ENCODE measurements at regions of chr9 and their contacts with region 1.

Region 1: DNA sequence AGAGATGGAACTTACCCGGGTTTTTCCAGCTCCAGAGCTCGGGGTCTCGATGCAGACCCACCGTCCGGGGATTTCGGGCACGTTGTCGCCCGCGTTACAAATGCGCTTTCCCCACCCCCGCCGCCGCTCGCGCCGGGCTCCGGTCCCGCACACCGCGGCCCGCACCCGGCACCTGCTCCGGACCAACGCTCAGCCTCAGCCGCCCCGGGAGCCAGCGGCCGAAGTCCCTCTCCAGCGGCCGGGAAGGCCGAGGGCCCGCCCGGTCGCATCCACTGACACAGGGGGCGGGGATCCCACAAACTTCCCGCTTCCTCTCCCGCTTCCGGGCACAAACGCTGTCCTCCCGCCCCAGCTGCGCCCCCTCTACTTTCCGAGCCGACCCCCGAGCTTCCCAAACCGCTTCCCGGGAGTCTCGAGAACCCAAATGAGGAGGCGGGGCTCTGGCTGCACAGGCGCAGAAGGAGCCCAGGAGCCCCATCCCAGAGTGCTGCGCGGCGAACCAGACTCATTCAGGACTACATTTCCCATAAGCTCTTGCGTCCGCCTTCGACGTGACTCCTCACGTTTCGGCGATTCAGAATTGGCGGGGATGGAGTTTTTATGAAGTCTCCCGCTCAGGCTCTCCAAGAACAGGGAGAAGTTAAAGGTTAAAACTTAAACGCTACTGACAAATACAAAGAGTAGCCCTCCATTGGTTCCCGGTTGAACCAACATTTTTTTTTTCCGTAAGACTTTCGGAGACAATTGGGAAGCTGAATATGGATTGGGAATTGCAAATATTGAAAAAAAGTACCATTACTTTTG is at the start of gene ZNF782:
- DNase-seq: peak; percentile 83 to 95
- ATAC-seq: peak; percentile 94 to 99
- H3K4me3 ChIP-seq: peak within 1 kb of the TSS; percentile 65
- H3K27ac ChIP-seq: peak within 1 kb of the TSS; percentile 69 to 89
- H3K4me1 ChIP-seq: no peaks in the 10 kb centered on the region; the same call in 2 of the 3 replicates
- CTCF ChIP-seq: no peak
- EP300 ChIP-seq: no peak
- POLR2A ChIP-seq: peak; percentile 65
- RAD21 ChIP-seq: no peak
- polyA plus RNA-seq, gene ZNF782: 2.1 and 2.7 TPM in 2 replicates

Region 2: DNA sequence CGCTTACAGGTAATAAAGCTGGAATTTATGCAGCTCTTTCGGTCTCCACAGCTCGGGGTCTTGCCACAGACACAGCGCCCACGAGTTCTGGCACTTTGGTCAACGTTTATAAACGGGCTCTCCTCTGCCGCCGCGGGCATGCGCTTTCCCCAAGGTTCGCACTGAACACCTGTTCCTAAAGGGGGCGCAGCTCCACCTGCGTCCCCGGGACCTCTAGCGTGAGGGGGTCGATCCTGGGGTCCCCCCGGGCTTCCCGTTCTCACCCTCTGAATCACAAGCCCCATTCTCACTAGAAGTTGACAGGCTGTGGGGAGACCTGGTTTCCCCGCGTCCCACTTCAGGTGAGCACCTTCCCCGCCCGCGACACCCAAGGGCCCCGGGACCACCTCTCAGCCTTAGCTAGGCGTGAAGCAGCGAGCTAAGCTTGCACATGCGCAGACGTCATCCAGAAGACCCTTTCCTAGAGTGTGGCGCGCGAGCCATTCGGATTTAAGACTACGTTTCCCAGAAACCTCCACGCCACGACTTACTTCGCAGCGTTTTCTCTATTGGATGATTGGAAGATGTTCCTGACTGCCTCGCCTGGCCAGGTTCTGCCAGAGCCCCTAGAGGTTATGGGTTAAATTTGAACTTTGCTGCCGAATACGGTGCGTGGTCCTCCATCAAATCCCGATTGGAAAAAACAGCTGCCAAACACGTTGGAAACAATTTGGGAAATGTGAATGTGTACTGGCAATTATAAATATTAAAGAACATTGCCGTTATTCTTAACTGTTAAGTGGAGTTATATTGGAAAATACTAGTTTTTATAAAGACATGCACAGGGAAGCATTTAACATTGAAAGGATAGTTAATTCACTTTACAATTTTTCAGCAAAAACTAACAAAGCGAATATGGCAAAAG is 21.4 kb after region 1 on chr9:
- CTCF ChIA-PET with region 1: interaction called, 91 read pairs
- POLR2A ChIA-PET with region 1: no interaction called
- DNase-seq: peak; percentile 89 to 91
- ATAC-seq: peak; percentile 96 to 98
- H3K4me3 ChIP-seq: peak overlapping the region; percentile 61
- H3K27ac ChIP-seq: peak overlapping the region; percentile 71 to 90; a peak in 5 of 6 replicates
- H3K4me1 ChIP-seq: peaks cover 8% of the 10 kb centered on the region; the same call in 1 of the 3 replicates
- CTCF ChIP-seq: peak; percentile 21; the same call in 2 of the 3 replicates
- EP300 ChIP-seq: no peak
- POLR2A ChIP-seq: no peak
- RAD21 ChIP-seq: no peak

Region 3: DNA sequence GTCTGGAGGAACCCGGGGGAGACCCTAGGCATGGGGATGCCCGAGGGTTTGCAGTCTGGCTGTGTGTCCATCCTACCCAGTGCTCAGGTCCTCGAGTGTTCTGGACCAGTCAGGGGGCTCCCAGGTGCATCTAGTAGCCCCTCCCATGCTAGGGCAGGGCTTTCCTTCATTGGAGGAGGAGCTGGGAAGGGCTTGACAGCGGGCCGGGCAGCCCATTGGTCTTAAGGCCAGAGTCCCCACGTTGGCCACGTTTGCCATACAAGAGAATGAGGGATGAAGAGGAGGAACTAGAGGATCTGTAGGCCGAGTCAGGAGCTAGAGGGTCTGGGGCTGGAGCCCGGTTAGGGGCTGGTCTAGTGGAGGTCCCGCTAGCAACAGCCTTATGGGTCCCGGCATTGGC is 222.0 kb after region 1 on chr9:
- CTCF ChIA-PET with region 1: no interaction called
- POLR2A ChIA-PET with region 1: no interaction called
- DNase-seq: no peak
- ATAC-seq: no peak
- H3K4me3 ChIP-seq: no peak overlapping the region
- H3K27ac ChIP-seq: no peak overlapping the region
- H3K4me1 ChIP-seq: no peaks in the 10 kb centered on the region
- CTCF ChIP-seq: no peak
- EP300 ChIP-seq: no peak
- POLR2A ChIP-seq: no peak
- RAD21 ChIP-seq: no peak

Measured in A549 (cell line).